Activated T-helper 1 cell treated with anti-CD3 and anti-CD28 coated beads, Interleukin-12 subunit alpha, Interleukin-12 subunit beta, Interleukin-2, Interleukin-4 antibody, amounts not matched to agents 30 ng/mL and 10 ng/mL and 1 ng/mL, durations not matched to agents 14 hours and 24 hours and 36 hours (primary cell): ENCODE measurements at regions of chr11 and their contacts with region 1.

Region 1: DNA sequence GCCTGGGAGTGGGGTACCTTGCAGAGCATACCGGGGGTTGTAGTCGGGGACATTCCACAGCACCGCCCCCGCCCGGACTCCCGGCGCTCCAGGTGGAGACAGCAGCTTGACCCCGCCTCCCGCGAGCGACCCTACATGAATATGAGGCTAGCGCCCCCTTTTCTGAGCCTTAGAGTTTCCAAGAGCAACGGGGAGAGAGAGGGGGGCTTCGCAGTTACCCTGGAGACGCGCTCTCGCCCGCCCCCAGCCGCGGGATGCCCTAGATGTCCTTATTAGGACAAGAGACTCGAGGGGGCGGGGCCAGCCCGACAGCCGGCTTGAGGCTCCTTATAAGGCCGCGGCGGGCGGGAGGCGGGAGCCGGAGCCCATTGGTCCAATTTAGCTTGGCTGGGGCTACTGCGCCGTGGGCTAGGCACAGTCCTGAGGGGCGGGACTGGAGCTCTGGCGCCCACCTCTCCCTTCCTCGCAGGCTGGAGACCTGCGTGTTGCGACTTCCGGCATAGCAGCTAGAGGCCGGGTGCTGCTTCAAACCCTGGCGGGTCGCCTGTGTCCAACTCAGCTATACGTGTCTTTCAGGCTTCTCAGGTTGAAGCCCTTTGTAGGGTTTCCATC is 927 bp upstream of the MUS81 start:
- DNase-seq: peak; percentile 97
- H3K4me3 Mint-ChIP-seq: peak overlapping the region; percentile 96
- H3K27ac Mint-ChIP-seq: peak overlapping the region; percentile 99
- H3K4me1 Mint-ChIP-seq: peaks cover 49% of the 10 kb centered on the region
- H3K27me3 Mint-ChIP-seq: no peaks in the 10 kb centered on the region

Region 2: GRCh38 chr11:65569973-65570918 is 289.1 kb before region 1 on chr11 and contains the start of gene ZNRD2:
- intact Hi-C with region 1: loop called (anchors 1 kb)
- DNase-seq: peak; percentile 99
- H3K4me3 Mint-ChIP-seq: peak within 1 kb of the TSS; percentile 99
- H3K27ac Mint-ChIP-seq: peak within 1 kb of the TSS; percentile 98
- H3K4me1 Mint-ChIP-seq: peaks cover 64% of the 10 kb centered on the region
- H3K27me3 Mint-ChIP-seq: no peaks in the 10 kb centered on the region
- total RNA-seq, gene ZNRD2: 94.6 and 96.9 TPM in 2 replicates

Region 3: DNA sequence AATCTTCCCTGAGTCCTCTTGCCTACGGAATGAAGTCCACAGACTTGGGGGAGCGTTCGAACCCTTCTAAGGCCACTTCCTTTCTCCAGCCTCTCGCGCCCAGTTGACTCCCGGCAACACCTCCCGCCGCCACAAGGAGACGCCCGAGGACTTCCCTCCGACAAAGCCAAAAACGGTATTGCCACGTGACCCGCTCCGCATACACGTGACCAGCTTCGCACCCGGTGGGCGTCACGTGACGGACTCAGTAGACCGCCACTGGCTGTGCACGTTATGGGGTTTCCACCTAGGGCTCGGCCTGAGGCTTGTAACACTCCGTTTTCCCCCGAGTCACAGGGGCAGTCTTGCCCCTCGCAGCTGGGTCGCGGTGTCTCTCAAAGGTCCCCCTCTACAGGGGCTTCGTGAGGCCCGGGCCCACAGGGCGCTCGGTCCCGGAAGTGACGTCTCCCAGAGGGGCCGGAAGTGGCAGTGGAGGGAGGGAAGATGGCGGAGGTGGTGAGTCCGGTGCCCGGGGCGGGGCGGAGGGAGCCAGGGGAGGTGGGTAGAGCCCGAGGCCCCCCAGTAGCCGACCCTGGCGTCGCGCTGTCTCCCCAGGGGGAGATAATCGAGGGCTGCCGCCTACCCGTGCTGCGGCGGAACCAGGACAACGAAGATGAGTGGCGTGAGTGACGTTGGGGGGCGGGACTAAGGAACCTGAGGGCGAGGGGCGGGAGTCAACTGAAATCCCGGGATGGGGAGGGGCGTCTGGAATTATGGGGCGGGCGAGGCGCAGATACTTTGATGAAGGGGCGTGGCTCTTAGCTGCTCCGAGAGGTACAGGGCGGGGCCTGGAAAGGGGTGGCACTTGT is 147.3 kb before region 1 on chr11 and contains the start of gene KAT5:
- intact Hi-C with region 1: loop called (anchors 1 kb)
- DNase-seq: peak; percentile 98
- H3K4me3 Mint-ChIP-seq: peak within 1 kb of the TSS; percentile 96
- H3K27ac Mint-ChIP-seq: peak within 1 kb of the TSS; percentile 98
- H3K4me1 Mint-ChIP-seq: peaks cover 29% of the 10 kb centered on the region
- H3K27me3 Mint-ChIP-seq: no peaks in the 10 kb centered on the region
- total RNA-seq, gene KAT5: 68.1 and 75.0 TPM in 2 replicates

Region 4: DNA sequence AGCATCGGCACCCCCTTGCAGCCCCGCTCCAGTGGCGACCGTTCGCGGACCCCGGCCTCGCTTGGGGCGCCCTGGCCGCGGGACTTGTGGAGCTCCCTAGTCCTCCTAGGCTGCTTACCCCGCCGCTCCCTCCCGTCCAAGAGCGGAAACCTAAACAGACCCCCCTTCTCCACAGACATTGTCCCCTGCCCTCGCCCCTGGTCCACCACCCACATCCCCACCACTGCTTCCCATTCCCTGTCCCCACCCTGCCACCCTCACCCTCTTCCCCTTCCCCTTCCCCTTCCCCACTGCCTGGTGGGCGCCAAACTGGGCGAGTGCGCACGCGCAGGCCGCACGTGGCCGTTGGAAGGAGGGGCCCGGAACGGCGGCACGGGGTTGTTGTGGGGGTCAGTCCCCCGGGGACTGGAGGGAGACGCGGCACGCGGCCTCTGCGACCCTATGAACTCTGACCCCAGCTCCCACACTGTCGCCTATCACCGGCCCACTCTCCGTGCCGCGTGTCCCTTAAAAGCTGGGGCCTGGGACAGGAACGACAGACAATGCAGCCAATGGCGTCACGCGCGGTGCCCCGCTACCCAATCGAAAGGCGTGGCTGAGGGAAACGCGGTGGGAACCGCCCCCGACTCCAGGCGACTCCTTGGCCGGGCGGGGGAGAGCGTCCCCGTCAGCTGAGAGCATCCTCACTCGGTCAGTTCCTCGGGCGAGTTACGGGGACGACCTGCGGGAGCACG is 25.8 kb before region 1 on chr11 and contains the start of gene SNX32:
- intact Hi-C with region 1: loop called (anchors 1 kb)
- DNase-seq: peak; percentile 93
- H3K4me3 Mint-ChIP-seq: no peak within 1 kb of the TSS
- H3K27ac Mint-ChIP-seq: no peak within 1 kb of the TSS
- H3K4me1 Mint-ChIP-seq: peaks cover 23% of the 10 kb centered on the region
- H3K27me3 Mint-ChIP-seq: peaks cover 9% of the 10 kb centered on the region
- total RNA-seq, gene SNX32: 1.6 and 1.9 TPM in 2 replicates

Region 5: GRCh38 chr11:65919146-65920033 is 60.1 kb after region 1 on chr11 and contains the start of gene DRAP1:
- intact Hi-C with region 1: loop called (anchors 1 kb)
- DNase-seq: peak; percentile 97
- H3K4me3 Mint-ChIP-seq: peak within 1 kb of the TSS; percentile 94
- H3K27ac Mint-ChIP-seq: peak within 1 kb of the TSS; percentile 84
- H3K4me1 Mint-ChIP-seq: peaks cover 17% of the 10 kb centered on the region
- H3K27me3 Mint-ChIP-seq: no peaks in the 10 kb centered on the region
- total RNA-seq, gene DRAP1: 119 and 129 TPM in 2 replicates

Region 6: DNA sequence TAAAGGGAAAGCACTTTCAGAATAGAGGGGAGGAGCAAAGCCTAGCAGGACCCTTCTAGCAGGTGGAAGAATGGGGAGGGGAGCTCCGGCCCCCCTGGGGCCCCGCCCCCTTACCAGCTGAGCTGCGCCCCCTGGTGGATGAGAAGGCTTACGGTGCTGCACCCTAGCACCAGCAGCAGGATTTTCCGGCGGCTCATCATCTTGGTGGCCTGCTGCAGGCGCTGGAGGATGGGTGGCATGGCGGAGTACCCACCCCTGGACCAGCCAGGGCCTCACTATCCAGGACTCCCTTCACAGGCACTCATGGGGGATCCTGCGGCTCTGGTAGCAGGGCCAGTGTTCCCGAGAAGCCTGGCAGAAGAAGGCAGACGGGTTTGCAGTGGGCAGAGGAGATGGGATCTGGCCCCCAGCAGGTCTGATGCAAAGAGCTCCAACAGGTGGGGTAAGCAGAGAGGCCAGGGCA is 185.9 kb after region 1 on chr11:
- intact Hi-C with region 1: loop called (anchors 2 kb)
- DNase-seq: peak; percentile 79
- H3K4me3 Mint-ChIP-seq: no peak overlapping the region
- H3K27ac Mint-ChIP-seq: peak overlapping the region; percentile 11
- H3K4me1 Mint-ChIP-seq: peaks cover 16% of the 10 kb centered on the region
- H3K27me3 Mint-ChIP-seq: peaks cover 7% of the 10 kb centered on the region

Region 7: GRCh38 chr11:67401495-67402191 is 1542.3 kb after region 1 on chr11 and contains the start of gene PPP1CA:
- intact Hi-C with region 1: loop called (anchors 10 kb)
- DNase-seq: peak; percentile 87
- H3K4me3 Mint-ChIP-seq: peak within 1 kb of the TSS; percentile 92
- H3K27ac Mint-ChIP-seq: peak within 1 kb of the TSS; percentile 86
- H3K4me1 Mint-ChIP-seq: peaks cover 50% of the 10 kb centered on the region
- H3K27me3 Mint-ChIP-seq: no peaks in the 10 kb centered on the region
- total RNA-seq, gene PPP1CA: 260 and 263 TPM in 2 replicates